ENCODE measurements at regions of chr5 and their contacts with region 1.

Region 1: GRCh38 chr5:158812408-158812807 is 287.3 kb downstream of the EBF1 start:
- DNase-seq: peak; percentile 13 to 83 (median 72)
- ATAC-seq: peak; percentile 75
- H3K4me3 ChIP-seq: peak overlapping the region; percentile 26
- H3K4me3 Mint-ChIP-seq: peak overlapping the region; percentile 39 to 81 (median 70)
- H3K27ac ChIP-seq: peak overlapping the region; percentile 42
- H3K27ac Mint-ChIP-seq: peak overlapping the region; percentile 60 to 88 (median 82)
- H3K4me1 ChIP-seq: peaks cover 11 to 25% of the 10 kb centered on the region in 2 donors
- H3K4me1 Mint-ChIP-seq: peaks cover 22 to 70% (median 52%) of the 10 kb centered on the region in 7 donors
- H3K27me3 ChIP-seq: no peaks in the 10 kb centered on the region
- H3K27me3 Mint-ChIP-seq: peaks cover 0 to 7% (median 0%) of the 10 kb centered on the region in 5 donors

Region 2: DNA sequence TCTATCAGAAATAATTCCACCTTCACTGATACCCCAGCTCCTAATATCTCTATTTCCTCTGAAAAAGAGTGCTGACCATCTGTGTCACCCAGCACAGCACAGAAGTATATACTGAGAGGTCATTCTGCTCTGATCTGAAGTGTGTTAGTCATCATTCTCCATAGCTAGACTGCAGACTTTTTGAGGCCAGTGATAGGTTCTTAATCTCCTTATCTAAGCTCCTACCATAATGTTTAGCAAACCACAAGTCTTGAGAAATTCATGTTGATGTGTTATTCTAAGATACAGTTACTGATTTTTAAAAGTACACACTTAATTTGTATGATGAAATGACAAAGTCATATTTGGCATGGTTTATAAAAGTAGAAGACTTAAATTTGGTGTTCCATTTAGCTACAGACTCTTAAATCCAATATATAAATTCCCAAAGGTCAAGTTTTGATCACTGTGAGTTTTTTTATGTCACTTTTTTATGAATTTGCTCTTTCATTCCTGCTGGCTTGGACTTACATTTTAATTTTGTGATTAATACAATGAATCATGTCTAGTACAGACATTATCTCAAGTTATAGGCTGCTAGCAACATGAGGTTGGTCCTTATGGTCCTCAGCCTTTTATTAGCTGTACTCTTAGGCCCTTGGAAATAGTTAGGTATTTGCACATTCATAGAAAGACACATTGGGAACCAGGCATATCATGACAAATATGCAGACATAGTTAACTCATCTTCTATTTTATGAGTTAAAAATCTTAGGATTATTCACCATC is 93.5 kb before region 1 on chr5:
- CTCF ChIA-PET with region 1: no interaction called
- POLR2A ChIA-PET with region 1: no interaction called
- intact Hi-C with region 1: no loop called
- DNase-seq: no peak
- ATAC-seq: no peak
- H3K4me3 ChIP-seq: no peak overlapping the region
- H3K4me3 Mint-ChIP-seq: no peak overlapping the region
- H3K27ac ChIP-seq: no peak overlapping the region
- H3K27ac Mint-ChIP-seq: no peak overlapping the region
- H3K4me1 ChIP-seq: no peaks in the 10 kb centered on the region
- H3K4me1 Mint-ChIP-seq: no peaks in the 10 kb centered on the region
- H3K27me3 ChIP-seq: no peaks in the 10 kb centered on the region
- H3K27me3 Mint-ChIP-seq: peaks cover 0 to 16% (median 6%) of the 10 kb centered on the region in 5 donors

Region 3: GRCh38 chr5:158841481-158842276 is 29.3 kb after region 1 on chr5:
- CTCF ChIA-PET with region 1: no interaction called
- POLR2A ChIA-PET with region 1: no interaction called
- intact Hi-C with region 1: loop called in 1 of 2 experiments (anchors 1 kb)
- DNase-seq: no peak
- ATAC-seq: no peak
- H3K4me3 ChIP-seq: no peak overlapping the region
- H3K4me3 Mint-ChIP-seq: no peak overlapping the region
- H3K27ac ChIP-seq: no peak overlapping the region
- H3K27ac Mint-ChIP-seq: no peak overlapping the region
- H3K4me1 ChIP-seq: no peaks in the 10 kb centered on the region
- H3K4me1 Mint-ChIP-seq: peaks cover 0 to 6% (median 0%) of the 10 kb centered on the region in 7 donors
- H3K27me3 ChIP-seq: no peaks in the 10 kb centered on the region
- H3K27me3 Mint-ChIP-seq: peaks cover 0 to 7% (median 4%) of the 10 kb centered on the region in 5 donors

Region 4: DNA sequence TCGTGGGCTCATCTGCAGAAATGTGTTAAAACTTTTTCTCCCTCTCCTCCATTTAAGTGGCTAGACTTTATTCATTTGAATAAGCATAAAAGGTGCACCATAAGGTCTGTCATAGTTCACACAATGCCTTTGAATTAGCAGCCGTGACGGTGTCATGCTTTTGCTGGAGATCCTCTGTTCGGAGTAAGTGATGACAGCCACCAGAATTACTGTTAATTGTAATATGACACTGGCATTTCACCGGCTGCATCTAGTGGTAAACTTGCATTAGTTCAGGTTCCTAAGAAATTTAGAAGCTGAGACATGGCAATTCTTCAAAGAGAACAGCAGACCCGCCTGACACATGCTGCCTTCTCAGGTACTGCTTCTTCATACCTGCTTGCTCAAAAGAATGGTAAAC is 45.6 kb after region 1 on chr5:
- CTCF ChIA-PET with region 1: no interaction called
- POLR2A ChIA-PET with region 1: interaction called, 5 read pairs
- intact Hi-C with region 1: loop called in 1 of 2 experiments (anchors 5 kb)
- DNase-seq: peak in 2 of 9 donors; percentile 19 to 20
- ATAC-seq: no peak
- H3K4me3 ChIP-seq: no peak overlapping the region
- H3K4me3 Mint-ChIP-seq: peak overlapping the region in 6 of 10 donors; percentile 12 to 58 (median 24)
- H3K27ac ChIP-seq: no peak overlapping the region
- H3K27ac Mint-ChIP-seq: peak overlapping the region in 7 of 9 donors; percentile 8 to 72 (median 30)
- H3K4me1 ChIP-seq: peaks cover 0 to 34% of the 10 kb centered on the region in 2 donors
- H3K4me1 Mint-ChIP-seq: peaks cover 9 to 64% (median 44%) of the 10 kb centered on the region in 7 donors
- H3K27me3 ChIP-seq: no peaks in the 10 kb centered on the region
- H3K27me3 Mint-ChIP-seq: peaks cover 0 to 8% (median 0%) of the 10 kb centered on the region in 5 donors

Region 5: GRCh38 chr5:158875272-158875679 is 62.9 kb after region 1 on chr5:
- CTCF ChIA-PET with region 1: interaction called, 3 read pairs
- POLR2A ChIA-PET with region 1: no interaction called
- intact Hi-C with region 1: loop called in 1 of 2 experiments (anchors 5 kb)
- DNase-seq: peak in 5 of 9 donors; percentile 0 to 37 (median 20)
- ATAC-seq: peak; percentile 44
- H3K4me3 ChIP-seq: peak overlapping the region; percentile 18
- H3K4me3 Mint-ChIP-seq: peak overlapping the region; percentile 67 to 89 (median 82)
- H3K27ac ChIP-seq: no peak overlapping the region
- H3K27ac Mint-ChIP-seq: peak overlapping the region; percentile 82 to 94 (median 89)
- H3K4me1 ChIP-seq: no peaks in the 10 kb centered on the region
- H3K4me1 Mint-ChIP-seq: peaks cover 8 to 33% (median 28%) of the 10 kb centered on the region in 7 donors
- H3K27me3 ChIP-seq: no peaks in the 10 kb centered on the region
- H3K27me3 Mint-ChIP-seq: peaks cover 0 to 9% (median 4%) of the 10 kb centered on the region in 5 donors

Measured in naive thymus-derived CD4-positive, alpha-beta T cell (primary cell).